Activated B cell treated with CpG ODN at 0.5 μM for 24 hours (primary cell): ENCODE measurements at regions of chr17 and their contacts with region 1.

Region 1: DNA sequence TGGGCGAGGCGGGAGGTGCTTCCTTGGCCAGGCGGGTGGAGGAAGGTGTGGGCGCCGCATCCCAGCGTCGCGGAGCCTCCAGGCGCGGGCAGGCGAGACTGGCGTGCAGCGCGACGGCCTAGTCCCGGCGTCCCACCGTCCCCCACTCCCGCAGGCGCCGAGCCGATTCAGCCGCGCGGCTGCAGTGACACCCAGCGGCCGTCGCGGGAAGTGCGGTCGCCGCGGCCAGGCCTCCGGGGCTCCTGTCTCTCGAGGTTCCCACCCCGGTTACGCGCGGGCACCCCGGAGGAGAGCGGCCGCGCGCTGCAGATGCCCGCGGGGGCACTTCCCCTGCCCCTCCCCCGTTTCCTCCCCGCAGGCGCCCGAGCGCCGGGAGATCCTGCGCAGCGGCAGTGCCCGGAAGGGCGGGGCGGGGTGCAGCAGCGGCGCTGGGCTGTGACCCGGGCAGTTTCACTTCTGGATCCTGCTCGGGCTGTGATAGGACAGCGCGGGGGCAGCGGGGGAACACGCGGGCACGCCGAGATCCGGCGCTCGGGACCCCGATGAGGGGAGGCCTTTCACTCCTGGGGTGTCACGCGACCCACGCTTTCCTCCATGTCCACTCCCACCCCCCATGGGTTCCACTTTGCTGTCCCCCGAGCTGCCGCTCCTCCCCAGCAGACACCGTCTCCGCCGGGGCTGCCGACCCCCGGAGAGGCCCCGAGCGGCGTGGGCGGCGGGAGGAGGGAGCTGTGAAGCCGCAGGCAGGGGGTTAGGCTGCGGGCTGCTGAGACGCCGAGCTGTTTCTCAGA is 16.6 kb downstream of the GRB7 start:
- DNase-seq: peak; percentile 99
- ATAC-seq: peak; percentile 70
- H3K4me3 Mint-ChIP-seq: peak overlapping the region; percentile 77
- H3K27ac Mint-ChIP-seq: peak overlapping the region; percentile 97
- H3K4me1 Mint-ChIP-seq: peaks cover 64% of the 10 kb centered on the region
- H3K27me3 Mint-ChIP-seq: no peaks in the 10 kb centered on the region
- CTCF ChIP-seq: peak; percentile 41

Region 2: GRCh38 chr17:39547713-39548478 is 206.5 kb before region 1 on chr17:
- CTCF ChIA-PET with region 1: interaction called, 5 read pairs
- POLR2A ChIA-PET with region 1: interaction called, 4 read pairs
- intact Hi-C with region 1: loop called (anchors 2 kb)
- DNase-seq: peak; percentile 74
- ATAC-seq: peak; percentile 65
- H3K4me3 Mint-ChIP-seq: no peak overlapping the region
- H3K27ac Mint-ChIP-seq: no peak overlapping the region
- H3K4me1 Mint-ChIP-seq: peaks cover 40% of the 10 kb centered on the region
- H3K27me3 Mint-ChIP-seq: no peaks in the 10 kb centered on the region
- CTCF ChIP-seq: peak; percentile 78

Region 3: DNA sequence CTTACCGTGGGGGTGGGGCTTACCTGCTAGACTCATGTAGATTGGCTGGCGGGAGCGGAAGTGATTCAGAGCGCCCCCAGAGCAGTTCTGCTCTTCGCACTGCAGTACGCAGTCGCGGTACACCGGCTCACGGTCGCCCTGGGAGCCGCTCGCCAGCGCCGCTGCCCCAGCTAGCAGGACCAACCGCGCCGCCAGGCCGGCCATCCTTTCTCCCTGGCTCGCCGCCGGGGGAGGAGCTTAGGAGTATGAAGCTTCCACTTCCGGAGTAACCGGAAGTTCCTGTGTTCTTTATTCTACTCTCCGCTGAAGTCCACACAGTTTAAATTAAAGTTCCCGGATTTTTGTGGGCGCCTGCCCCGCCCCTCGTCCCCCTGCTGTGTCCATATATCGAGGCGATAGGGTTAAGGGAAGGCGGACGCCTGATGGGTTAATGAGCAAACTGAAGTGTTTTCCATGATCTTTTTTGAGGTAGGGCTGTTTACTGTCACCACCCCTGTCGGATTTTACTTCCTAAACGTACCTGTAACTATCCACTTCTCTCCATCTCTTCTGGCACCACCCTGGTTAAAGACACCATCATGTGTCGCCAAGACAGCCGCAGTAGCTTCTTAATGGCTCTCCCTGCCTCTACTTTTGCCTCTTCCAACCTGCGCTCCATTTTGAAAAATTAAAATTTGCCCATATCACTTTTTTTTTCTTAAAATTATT is 66.4 kb before region 1 on chr17 and contains the start of gene PGAP3:
- CTCF ChIA-PET with region 1: no interaction called
- POLR2A ChIA-PET with region 1: interaction called, 14 read pairs
- intact Hi-C with region 1: no loop called
- DNase-seq: peak; percentile 78
- ATAC-seq: peak; percentile 95
- H3K4me3 Mint-ChIP-seq: peak within 1 kb of the TSS; percentile 99
- H3K27ac Mint-ChIP-seq: peak within 1 kb of the TSS; percentile 97
- H3K4me1 Mint-ChIP-seq: peaks cover 18% of the 10 kb centered on the region
- H3K27me3 Mint-ChIP-seq: no peaks in the 10 kb centered on the region
- CTCF ChIP-seq: no peak
- total RNA-seq, gene PGAP3: 19.0 and 24.0 TPM in 2 replicates

Region 4: DNA sequence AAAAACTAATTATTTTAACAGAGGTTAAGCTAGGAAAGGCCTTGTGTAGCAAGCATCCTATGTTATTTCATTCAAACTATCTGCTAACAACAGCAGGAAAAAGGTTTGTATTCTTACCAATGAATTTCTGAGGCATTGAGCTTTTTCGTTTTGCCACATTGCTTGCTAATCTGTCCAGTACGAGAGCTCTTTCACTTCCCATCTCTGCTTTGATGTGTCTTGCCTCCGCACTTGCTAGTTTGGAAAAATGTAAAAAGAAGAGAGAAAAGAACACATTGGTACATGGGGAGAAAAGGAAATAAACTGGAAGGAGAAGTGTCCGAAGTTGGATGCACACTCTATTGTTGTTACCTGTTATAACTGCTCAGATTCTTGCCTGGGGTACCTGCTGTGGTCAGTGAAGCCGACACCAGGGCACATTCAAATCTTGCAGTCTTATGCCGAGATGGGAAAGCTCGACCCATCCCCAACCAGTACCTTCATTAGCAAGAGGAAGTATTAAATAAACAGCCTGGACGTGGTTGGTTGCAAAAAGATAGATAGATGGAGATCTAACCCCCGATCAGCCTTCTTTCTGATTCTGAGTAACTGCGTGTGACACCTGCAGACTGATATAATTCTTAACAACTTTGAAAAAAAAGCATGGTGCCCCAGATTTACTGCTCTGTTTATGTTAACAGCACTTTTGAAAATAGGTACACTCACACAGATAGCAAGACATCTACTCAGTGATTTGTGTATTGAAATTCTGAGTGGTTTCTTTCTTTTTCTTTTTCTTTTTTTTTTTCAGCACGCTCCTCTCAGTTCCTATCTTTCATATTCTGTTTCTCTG is 23.4 kb after region 1 on chr17:
- CTCF ChIA-PET with region 1: interaction called, 12 read pairs
- POLR2A ChIA-PET with region 1: interaction called, 308 read pairs
- intact Hi-C with region 1: loop called (anchors 1 kb)
- DNase-seq: no peak
- ATAC-seq: peak; percentile 44
- H3K4me3 Mint-ChIP-seq: peak overlapping the region; percentile 88
- H3K27ac Mint-ChIP-seq: peak overlapping the region; percentile 96
- H3K4me1 Mint-ChIP-seq: peaks cover 93% of the 10 kb centered on the region
- H3K27me3 Mint-ChIP-seq: no peaks in the 10 kb centered on the region
- CTCF ChIP-seq: no peak

Region 5: DNA sequence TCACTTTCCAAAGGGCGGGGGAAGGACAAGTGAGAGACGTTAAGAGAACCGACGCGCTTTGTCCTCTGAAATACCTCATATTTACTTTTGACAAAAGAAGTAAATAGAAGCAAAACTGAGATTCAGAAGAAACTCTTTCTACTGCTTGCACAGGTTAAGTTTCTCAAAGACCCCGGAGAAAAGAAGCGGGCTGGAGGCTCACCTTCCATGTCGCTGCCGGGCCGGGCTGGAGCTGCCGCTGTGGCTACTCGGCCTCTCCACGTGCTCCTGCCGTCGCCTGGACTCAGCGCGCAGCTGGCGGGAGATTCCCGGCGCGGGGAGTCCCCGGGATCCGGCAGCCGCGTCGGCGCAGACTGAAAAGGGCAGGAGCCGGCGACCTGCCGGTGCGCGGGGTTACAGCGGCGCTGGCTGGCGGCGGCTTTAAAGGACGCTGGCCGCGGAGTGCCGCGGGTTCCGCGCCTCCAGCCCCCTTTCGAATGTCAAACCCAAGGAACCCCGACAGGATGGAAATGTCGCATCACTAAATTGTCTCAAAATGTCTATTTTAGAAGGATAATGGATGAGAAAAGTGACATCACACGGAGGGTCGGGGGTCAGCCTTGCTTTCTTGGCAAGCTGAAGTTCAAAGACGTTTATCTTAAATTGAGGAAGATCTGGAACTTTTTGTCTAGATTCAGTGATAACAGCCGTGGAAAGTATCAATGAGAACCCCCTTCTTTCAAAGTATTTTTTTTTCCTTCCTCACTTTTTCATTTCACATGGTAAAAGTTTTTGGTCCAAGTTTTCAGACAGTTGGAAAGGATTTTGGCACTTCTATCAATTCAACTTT is 109.8 kb after region 1 on chr17 and contains the start of gene IKZF3:
- CTCF ChIA-PET with region 1: interaction called, 26 read pairs
- POLR2A ChIA-PET with region 1: interaction called, 165 read pairs
- intact Hi-C with region 1: loop called (anchors 1 kb)
- DNase-seq: peak; percentile 78
- ATAC-seq: peak; percentile 58
- H3K4me3 Mint-ChIP-seq: peak within 1 kb of the TSS; percentile 98
- H3K27ac Mint-ChIP-seq: peak within 1 kb of the TSS; percentile 99
- H3K4me1 Mint-ChIP-seq: peaks cover 71% of the 10 kb centered on the region
- H3K27me3 Mint-ChIP-seq: no peaks in the 10 kb centered on the region
- CTCF ChIP-seq: no peak
- total RNA-seq, gene IKZF3: 208 and 220 TPM in 2 replicates

Region 6: GRCh38 chr17:40317880-40318829 is 563.8 kb after region 1 on chr17:
- CTCF ChIA-PET with region 1: no interaction called
- POLR2A ChIA-PET with region 1: interaction called, 4 read pairs
- intact Hi-C with region 1: loop called (anchors 10 kb)
- DNase-seq: peak; percentile 88
- ATAC-seq: peak; percentile 65
- H3K4me3 Mint-ChIP-seq: peak overlapping the region; percentile 93
- H3K27ac Mint-ChIP-seq: peak overlapping the region; percentile 98
- H3K4me1 Mint-ChIP-seq: peaks cover 85% of the 10 kb centered on the region
- H3K27me3 Mint-ChIP-seq: no peaks in the 10 kb centered on the region
- CTCF ChIP-seq: no peak